ENCODE measurements at regions of chr3 and their contacts with region 1.

Region 1: GRCh38 chr3:157274644-157275137 is 114.7 kb upstream of the CCNL1 start:
- DNase-seq: no peak
- ATAC-seq: no peak
- H3K4me3 ChIP-seq: no peak overlapping the region
- H3K27ac ChIP-seq: no peak overlapping the region
- H3K4me1 ChIP-seq: no peaks in the 10 kb centered on the region
- H3K27me3 ChIP-seq: no peaks in the 10 kb centered on the region
- CTCF ChIP-seq: no peak

Region 2: GRCh38 chr3:155912579-155913190 is 1362.0 kb before region 1 on chr3:
- intact Hi-C with region 1: loop called in 1 of 2 experiments (anchors 10 kb)
- DNase-seq: no peak
- ATAC-seq: peak in 3 of 4 donors; percentile 21 to 46 (median 26)
- H3K4me3 ChIP-seq: no peak overlapping the region
- H3K27ac ChIP-seq: peak overlapping the region; percentile 14
- H3K4me1 ChIP-seq: peaks cover 7% of the 10 kb centered on the region
- H3K27me3 ChIP-seq: no peaks in the 10 kb centered on the region
- CTCF ChIP-seq: no peak

Region 3: DNA sequence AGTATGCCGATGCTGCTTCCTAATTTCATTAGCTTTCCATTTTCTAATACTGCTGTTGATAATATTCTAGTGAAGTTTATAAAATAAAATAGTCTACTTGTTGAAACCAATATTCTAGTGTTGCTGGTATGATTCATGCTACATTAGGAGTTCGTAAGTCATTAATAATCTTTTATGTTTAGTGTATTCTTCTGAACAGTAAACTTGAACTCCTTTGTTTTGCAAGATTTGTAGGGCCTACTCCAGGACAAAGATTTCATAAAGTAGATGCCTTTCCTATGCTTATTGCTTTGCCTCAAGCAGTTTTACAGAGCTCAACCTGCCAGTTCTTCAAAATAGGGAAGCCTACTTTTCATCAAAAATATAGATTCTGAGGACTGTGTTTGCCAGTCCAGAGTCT is 946.7 kb after region 1 on chr3:
- intact Hi-C with region 1: no loop called
- DNase-seq: no peak
- ATAC-seq: no peak
- H3K4me3 ChIP-seq: no peak overlapping the region
- H3K27ac ChIP-seq: no peak overlapping the region
- H3K4me1 ChIP-seq: no peaks in the 10 kb centered on the region
- H3K27me3 ChIP-seq: no peaks in the 10 kb centered on the region
- CTCF ChIP-seq: no peak

Measured in psoas muscle (tissue), 8 donors.